Activated CD4-positive, alpha-beta memory T cell treated with anti-CD3 and anti-CD28 coated beads for 36 hours (primary cell): ENCODE measurements at regions of chr3 and their contacts with region 1.

Region 1: GRCh38 chr3:125916376-125916978 is 52.5 kb upstream of the ROPN1B start:
- DNase-seq: peak; percentile 99
- H3K4me3 Mint-ChIP-seq: peak overlapping the region; percentile 84
- H3K27ac Mint-ChIP-seq: peak overlapping the region; percentile 83
- H3K4me1 Mint-ChIP-seq: peaks cover 23% of the 10 kb centered on the region
- H3K27me3 Mint-ChIP-seq: no peaks in the 10 kb centered on the region

Region 2: GRCh38 chr3:125374996-125375941 is 541.2 kb before region 1 on chr3 and contains the start of gene ZNF148:
- CTCF ChIA-PET with region 1: no interaction called
- POLR2A ChIA-PET with region 1: no interaction called
- intact Hi-C with region 1: loop called (anchors 5 kb)
- DNase-seq: peak; percentile 93
- H3K4me3 Mint-ChIP-seq: peak within 1 kb of the TSS; percentile 98
- H3K27ac Mint-ChIP-seq: peak within 1 kb of the TSS; percentile 94
- H3K4me1 Mint-ChIP-seq: peaks cover 36% of the 10 kb centered on the region
- H3K27me3 Mint-ChIP-seq: no peaks in the 10 kb centered on the region
- total RNA-seq, gene ZNF148: 27.9 to 29.9 TPM

Region 3: GRCh38 chr3:125767641-125768040 is 148.8 kb before region 1 on chr3:
- CTCF ChIA-PET with region 1: interaction called, 5 read pairs
- POLR2A ChIA-PET with region 1: no interaction called
- intact Hi-C with region 1: loop called (anchors 1 kb)
- DNase-seq: no peak
- H3K4me3 Mint-ChIP-seq: no peak overlapping the region
- H3K27ac Mint-ChIP-seq: no peak overlapping the region
- H3K4me1 Mint-ChIP-seq: peaks cover 7% of the 10 kb centered on the region
- H3K27me3 Mint-ChIP-seq: peaks cover 16% of the 10 kb centered on the region

Region 4: DNA sequence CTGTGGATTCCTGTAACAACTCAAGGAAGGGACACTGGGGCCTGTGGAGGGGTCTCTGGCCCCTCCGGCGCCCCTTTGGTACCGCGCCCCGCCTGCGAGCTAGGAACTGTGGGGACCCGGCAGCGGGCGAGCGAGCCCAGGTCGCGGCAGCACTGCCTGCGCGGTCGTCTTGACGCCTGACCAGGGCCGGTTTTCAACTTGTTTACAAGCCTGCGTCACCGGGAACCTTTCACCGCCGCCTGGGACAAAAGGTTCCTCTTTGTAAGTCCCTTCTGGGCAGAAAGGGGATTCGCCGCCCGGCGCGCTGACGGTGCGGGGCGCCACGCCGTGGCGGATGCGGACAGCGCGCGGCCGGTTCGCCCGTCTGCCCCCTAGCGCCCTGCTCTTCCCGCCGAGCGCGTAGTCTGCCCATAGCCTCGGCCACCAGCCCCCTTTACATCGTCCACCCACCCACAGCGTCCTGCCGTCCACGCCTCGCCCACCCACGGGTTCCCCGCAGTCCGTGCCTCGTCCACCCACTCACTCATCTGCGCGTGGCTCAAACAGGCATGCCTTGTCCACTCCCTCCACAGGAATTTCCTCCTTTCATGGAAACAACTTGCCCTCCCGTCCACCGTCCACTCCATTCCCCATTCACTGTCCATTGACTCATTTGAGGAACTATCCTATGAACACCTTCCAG is 472.8 kb after region 1 on chr3:
- CTCF ChIA-PET with region 1: no interaction called
- POLR2A ChIA-PET with region 1: no interaction called
- intact Hi-C with region 1: loop called (anchors 10 kb)
- DNase-seq: peak; percentile 58
- H3K4me3 Mint-ChIP-seq: no peak overlapping the region
- H3K27ac Mint-ChIP-seq: no peak overlapping the region
- H3K4me1 Mint-ChIP-seq: peaks cover 3% of the 10 kb centered on the region
- H3K27me3 Mint-ChIP-seq: peaks cover 52% of the 10 kb centered on the region

Region 5: GRCh38 chr3:127672516-127673190 is 1756.2 kb after region 1 on chr3 and contains the start of gene ABTB1:
- CTCF ChIA-PET with region 1: no interaction called
- POLR2A ChIA-PET with region 1: no interaction called
- intact Hi-C with region 1: loop called (anchors 5 kb)
- DNase-seq: peak; percentile 91
- H3K4me3 Mint-ChIP-seq: peak within 1 kb of the TSS; percentile 89
- H3K27ac Mint-ChIP-seq: peak within 1 kb of the TSS; percentile 89
- H3K4me1 Mint-ChIP-seq: peaks cover 23% of the 10 kb centered on the region
- H3K27me3 Mint-ChIP-seq: no peaks in the 10 kb centered on the region
- total RNA-seq, gene ABTB1: 14.8 TPM